ENCODE measurements at regions of chr2 and their contacts with region 1.

Region 1: GRCh38 chr2:85066874-85067351 is 66.3 kb upstream of the TCF7L1 start:
- DNase-seq: peak; percentile 84
- ATAC-seq: peak; percentile 96
- H3K4me3 ChIP-seq: peak overlapping the region; percentile 27; the same call in 1 of the 2 replicates
- H3K27ac ChIP-seq: no peak overlapping the region
- H3K4me1 ChIP-seq: no peaks in the 10 kb centered on the region
- H3K27me3 ChIP-seq: peaks cover 6% of the 10 kb centered on the region; the same call in 1 of the 2 replicates
- CTCF ChIP-seq: peak; percentile 88
- POLR2A ChIP-seq: 0 out of 2 replicates have a peak, but pooled peaks have one; percentile 32
- RAD21 ChIP-seq: peak; percentile 92

Region 2: DNA sequence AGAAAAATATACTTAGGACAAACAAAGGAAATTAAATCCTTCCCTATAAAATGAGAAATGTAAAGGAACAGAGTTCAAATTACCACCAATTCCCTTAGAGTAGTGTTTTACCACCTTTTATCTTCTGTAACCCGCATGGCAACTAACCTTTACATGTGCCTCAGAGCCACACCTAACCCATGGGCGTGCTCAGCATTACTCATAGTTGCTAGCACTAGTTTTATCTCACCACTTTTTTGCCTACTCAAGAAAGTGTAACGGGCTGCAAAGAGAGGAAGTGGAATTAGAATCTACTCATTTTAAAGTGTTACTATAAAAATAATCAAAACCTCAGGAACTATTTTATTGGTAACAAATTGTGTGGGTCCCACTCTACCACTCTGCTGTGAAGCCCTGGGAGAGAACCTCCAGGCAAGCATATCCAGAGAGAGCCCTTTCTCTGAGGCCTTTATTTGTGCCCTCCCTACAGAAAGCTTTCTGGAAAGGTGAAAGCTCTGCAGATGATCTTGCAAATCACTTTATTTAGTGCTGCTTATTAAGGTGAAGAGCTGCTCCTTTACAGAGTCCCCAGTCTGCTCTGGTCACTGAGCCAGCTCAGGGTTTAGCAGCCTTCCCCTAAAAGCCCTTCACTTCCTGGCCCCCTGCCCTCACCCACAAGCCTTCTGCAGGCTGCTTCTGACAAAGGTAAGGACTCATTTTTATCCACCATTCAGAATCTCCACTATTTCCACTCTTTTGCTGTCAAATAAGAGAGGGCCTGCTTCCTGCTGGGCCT is 284.8 kb before region 1 on chr2:
- CTCF ChIA-PET with region 1: no interaction called
- POLR2A ChIA-PET with region 1: no interaction called
- dilution Hi-C with region 1: no loop called
- in situ Hi-C with region 1: no loop called
- intact Hi-C with region 1: no loop called
- DNase-seq: peak; percentile 15
- ATAC-seq: no peak
- H3K4me3 ChIP-seq: no peak overlapping the region
- H3K27ac ChIP-seq: no peak overlapping the region
- H3K4me1 ChIP-seq: 0 out of 2 replicates have a peak, but pooled peaks cover 2% of the 10 kb centered on the region
- H3K27me3 ChIP-seq: no peaks in the 10 kb centered on the region
- CTCF ChIP-seq: no peak
- POLR2A ChIP-seq: no peak
- RAD21 ChIP-seq: no peak

Region 3: GRCh38 chr2:85053802-85054201 is 13.1 kb before region 1 on chr2:
- CTCF ChIA-PET with region 1: interaction called, 13 read pairs
- POLR2A ChIA-PET with region 1: no interaction called
- dilution Hi-C with region 1: no loop called
- in situ Hi-C with region 1: no loop called
- intact Hi-C with region 1: no loop called
- DNase-seq: peak; percentile 54
- ATAC-seq: peak; percentile 48
- H3K4me3 ChIP-seq: no peak overlapping the region
- H3K27ac ChIP-seq: no peak overlapping the region
- H3K4me1 ChIP-seq: peaks cover 6% of the 10 kb centered on the region
- H3K27me3 ChIP-seq: no peaks in the 10 kb centered on the region
- CTCF ChIP-seq: no peak
- POLR2A ChIP-seq: no peak
- RAD21 ChIP-seq: no peak

Region 4: GRCh38 chr2:85288244-85288725 is 221.4 kb after region 1 on chr2:
- CTCF ChIA-PET with region 1: interaction called, 11 read pairs
- POLR2A ChIA-PET with region 1: no interaction called
- dilution Hi-C with region 1: no loop called
- in situ Hi-C with region 1: loop called (anchors 5 kb)
- intact Hi-C with region 1: loop called (anchors 1 kb)
- DNase-seq: peak; percentile 78
- ATAC-seq: peak; percentile 86
- H3K4me3 ChIP-seq: no peak overlapping the region
- H3K27ac ChIP-seq: no peak overlapping the region
- H3K4me1 ChIP-seq: peaks cover 4% of the 10 kb centered on the region; the same call in 1 of the 2 replicates
- H3K27me3 ChIP-seq: no peaks in the 10 kb centered on the region
- CTCF ChIP-seq: no peak
- POLR2A ChIP-seq: no peak
- RAD21 ChIP-seq: no peak

Region 5: GRCh38 chr2:85302121-85302520 is 235.2 kb after region 1 on chr2:
- CTCF ChIA-PET with region 1: interaction called, 17 read pairs
- POLR2A ChIA-PET with region 1: no interaction called
- dilution Hi-C with region 1: no loop called
- in situ Hi-C with region 1: no loop called
- intact Hi-C with region 1: loop called (anchors 1 kb)
- DNase-seq: peak; percentile 2
- ATAC-seq: no peak
- H3K4me3 ChIP-seq: no peak overlapping the region
- H3K27ac ChIP-seq: no peak overlapping the region
- H3K4me1 ChIP-seq: no peaks in the 10 kb centered on the region
- H3K27me3 ChIP-seq: no peaks in the 10 kb centered on the region
- CTCF ChIP-seq: no peak
- POLR2A ChIP-seq: no peak
- RAD21 ChIP-seq: no peak

Measured in IMR-90 (cell line).